ENCODE measurements at regions of chr3 and their contacts with region 1.

Region 1: DNA sequence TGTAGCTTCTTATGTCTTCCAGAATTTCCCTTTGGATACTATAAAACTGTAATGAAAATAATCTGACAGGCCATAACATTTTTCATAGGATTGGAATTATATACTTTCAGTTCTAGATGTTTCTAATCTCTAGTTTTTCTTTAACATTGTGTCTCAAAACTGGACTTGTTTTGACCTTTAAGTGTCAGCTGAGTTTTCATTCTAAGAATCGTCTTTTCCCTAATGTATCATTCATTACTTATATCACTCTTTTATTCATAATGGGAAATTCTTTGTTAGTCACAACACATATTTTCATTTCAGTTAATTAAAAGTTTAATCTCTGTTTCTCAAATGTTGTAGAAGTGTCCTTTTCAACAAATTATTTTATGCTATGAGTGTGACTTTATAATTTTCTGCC is 11.9 kb downstream of the GPR171 start:
- DNase-seq: no peak
- ATAC-seq: no peak
- H3K4me3 ChIP-seq: no peak overlapping the region
- H3K4me3 Mint-ChIP-seq: no peak overlapping the region
- H3K27ac ChIP-seq: no peak overlapping the region
- H3K27ac Mint-ChIP-seq: no peak overlapping the region
- H3K4me1 ChIP-seq: peaks cover 6% of the 10 kb centered on the region
- H3K4me1 Mint-ChIP-seq: peaks cover 28% of the 10 kb centered on the region
- H3K27me3 ChIP-seq: no peaks in the 10 kb centered on the region
- H3K27me3 Mint-ChIP-seq: no peaks in the 10 kb centered on the region
- CTCF ChIP-seq: no peak

Region 2: DNA sequence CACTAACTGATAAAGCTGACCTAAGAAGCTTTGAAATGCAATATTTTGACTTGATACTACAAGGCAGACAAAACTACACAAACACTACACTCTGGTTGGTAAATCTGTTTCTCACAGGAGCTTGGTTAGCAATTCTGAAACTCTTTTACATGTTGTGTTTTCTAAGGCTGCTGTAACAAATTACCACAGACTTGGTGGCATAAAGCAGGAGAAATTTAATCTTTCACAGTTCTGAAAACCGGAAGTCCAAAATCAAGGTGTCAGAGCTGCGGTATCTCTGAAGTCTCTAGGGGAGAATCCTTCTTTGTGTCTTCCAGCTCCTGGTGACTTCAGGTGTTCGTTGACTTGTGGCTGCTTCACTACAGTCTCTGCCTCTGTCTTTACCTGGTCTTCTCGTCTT is 1207.5 kb before region 1 on chr3:
- CTCF ChIA-PET with region 1: no interaction called
- POLR2A ChIA-PET with region 1: no interaction called
- intact Hi-C with region 1: loop called in 1 of 2 experiments (anchors 5 kb)
- DNase-seq: no peak
- ATAC-seq: no peak
- H3K4me3 ChIP-seq: no peak overlapping the region
- H3K4me3 Mint-ChIP-seq: no peak overlapping the region
- H3K27ac ChIP-seq: no peak overlapping the region
- H3K27ac Mint-ChIP-seq: no peak overlapping the region
- H3K4me1 ChIP-seq: no peaks in the 10 kb centered on the region
- H3K4me1 Mint-ChIP-seq: no peaks in the 10 kb centered on the region
- H3K27me3 ChIP-seq: no peaks in the 10 kb centered on the region
- H3K27me3 Mint-ChIP-seq: peaks cover 34% of the 10 kb centered on the region
- CTCF ChIP-seq: no peak

Region 3: GRCh38 chr3:151210676-151211381 is 19.7 kb after region 1 on chr3:
- CTCF ChIA-PET with region 1: interaction called, 5 read pairs
- POLR2A ChIA-PET with region 1: interaction called, 3 read pairs
- intact Hi-C with region 1: loop called in 1 of 2 experiments (anchors 2 kb)
- DNase-seq: peak in 3 of 14 experiments; percentile 30 to 36 (median 34)
- ATAC-seq: peak; percentile 43
- H3K4me3 ChIP-seq: no peak overlapping the region
- H3K4me3 Mint-ChIP-seq: no peak overlapping the region
- H3K27ac ChIP-seq: no peak overlapping the region
- H3K27ac Mint-ChIP-seq: peak overlapping the region; percentile 60
- H3K4me1 ChIP-seq: peaks cover 29% of the 10 kb centered on the region
- H3K4me1 Mint-ChIP-seq: peaks cover 42% of the 10 kb centered on the region
- H3K27me3 ChIP-seq: no peaks in the 10 kb centered on the region
- H3K27me3 Mint-ChIP-seq: no peaks in the 10 kb centered on the region
- CTCF ChIP-seq: no peak

Region 4: GRCh38 chr3:151673974-151674373 is 482.9 kb after region 1 on chr3:
- CTCF ChIA-PET with region 1: no interaction called
- POLR2A ChIA-PET with region 1: no interaction called
- intact Hi-C with region 1: no loop called
- DNase-seq: no peak
- ATAC-seq: no peak
- H3K4me3 ChIP-seq: no peak overlapping the region
- H3K4me3 Mint-ChIP-seq: no peak overlapping the region
- H3K27ac ChIP-seq: no peak overlapping the region
- H3K27ac Mint-ChIP-seq: no peak overlapping the region
- H3K4me1 ChIP-seq: no peaks in the 10 kb centered on the region
- H3K4me1 Mint-ChIP-seq: no peaks in the 10 kb centered on the region
- H3K27me3 ChIP-seq: no peaks in the 10 kb centered on the region
- H3K27me3 Mint-ChIP-seq: peaks cover 5% of the 10 kb centered on the region
- CTCF ChIP-seq: no peak